ENCODE measurements at regions of chr16 and their contacts with region 1.

Region 1: DNA sequence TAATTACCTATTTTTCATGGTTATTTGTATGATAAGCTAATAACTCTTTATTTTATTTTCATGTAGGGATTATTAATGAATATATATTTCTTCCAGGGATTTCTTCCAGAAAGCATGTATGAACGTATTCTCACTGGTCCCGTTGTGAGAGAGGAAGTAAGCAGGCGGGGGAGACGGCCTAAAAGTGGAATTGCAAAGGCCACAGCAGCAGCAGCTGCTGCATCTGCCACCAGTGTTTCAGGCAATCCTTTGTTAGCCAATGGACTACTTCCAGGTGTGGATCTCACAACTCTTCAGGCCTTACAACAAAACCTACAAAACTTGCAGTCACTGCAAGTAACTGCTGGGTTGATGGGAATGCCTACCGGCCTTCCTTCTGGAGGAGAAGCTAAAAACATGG is 110.3 kb upstream of the RBL2 start:
- DNase-seq: no peak
- H3K4me3 ChIP-seq: no peak overlapping the region
- H3K27ac ChIP-seq: no peak overlapping the region
- H3K4me1 ChIP-seq: no peaks in the 10 kb centered on the region
- H3K27me3 ChIP-seq: no peaks in the 10 kb centered on the region
- CTCF ChIP-seq: no peak
- POLR2A ChIP-seq: no peak

Region 2: DNA sequence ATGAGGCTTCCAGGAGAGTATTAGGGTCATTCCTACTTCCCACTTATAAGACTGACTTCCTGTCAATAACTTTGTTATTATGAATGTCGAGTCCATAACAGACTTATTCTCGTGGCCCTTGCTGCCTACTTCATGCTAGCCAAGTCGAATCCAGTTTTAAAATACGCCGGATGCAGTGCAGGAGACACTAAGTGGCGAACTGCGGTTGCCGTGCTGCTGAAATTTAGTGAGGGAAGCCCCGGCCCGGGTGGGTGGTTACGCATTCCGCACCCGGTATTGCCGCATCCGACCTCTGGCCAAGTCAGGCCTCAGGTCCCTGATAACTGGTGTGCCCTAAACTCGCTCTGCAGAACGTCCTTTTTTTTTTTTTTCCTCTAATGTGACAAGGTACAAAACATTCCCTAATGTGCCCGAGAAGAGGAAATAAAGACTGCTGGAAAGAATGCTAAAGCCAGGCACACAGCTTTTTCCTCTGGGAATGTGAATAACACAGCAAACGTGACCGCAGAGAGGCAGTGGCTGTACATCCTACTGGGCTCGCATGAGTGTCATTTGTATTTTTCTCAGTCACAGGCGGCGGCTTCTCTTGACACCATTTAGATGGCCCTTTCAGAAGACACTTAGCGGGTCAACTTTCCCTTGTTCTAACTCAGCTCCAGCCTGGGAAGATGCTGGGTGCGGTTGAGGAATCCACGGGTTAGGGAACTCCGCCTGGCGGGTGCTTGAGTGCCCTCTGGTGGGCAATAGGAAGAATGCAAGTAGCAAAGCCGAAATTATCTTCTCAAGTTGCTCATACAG is 186.2 kb after region 1 on chr16:
- intact Hi-C with region 1: loop called (anchors 10 kb)
- DNase-seq: peak; percentile 47
- H3K4me3 ChIP-seq: no peak overlapping the region
- H3K27ac ChIP-seq: peak overlapping the region in 1 of 2 donors; percentile 33
- H3K4me1 ChIP-seq: no peaks in the 10 kb centered on the region
- H3K27me3 ChIP-seq: no peaks in the 10 kb centered on the region
- CTCF ChIP-seq: peak; percentile 80 to 90 (median 88)
- POLR2A ChIP-seq: no peak